ENCODE measurements at regions of chr17 and their contacts with region 1.

Region 1: GRCh38 chr17:42388381-42389134 is at the start of gene STAT3:
- DNase-seq: peak; percentile 100
- ATAC-seq: peak; percentile 99
- H3K4me3 ChIP-seq: peak within 1 kb of the TSS; percentile 93 to 98 (median 96)
- H3K27ac ChIP-seq: peak within 1 kb of the TSS; percentile 78
- H3K4me1 ChIP-seq: peaks cover 68% of the 10 kb centered on the region
- H3K27me3 ChIP-seq: no peaks in the 10 kb centered on the region; a peak in 1 of 5 replicates
- CTCF ChIP-seq: peak; percentile 57
- EP300 ChIP-seq: peak; percentile 97 to 100; a peak in 3 of 4 replicates
- POLR2A ChIP-seq: peak; percentile 54 to 88
- RAD21 ChIP-seq: peak; percentile 54; the same call in 1 of the 2 replicates
- total RNA-seq, gene STAT3: 61.8 and 82.7 TPM in 2 replicates

Region 2: GRCh38 chr17:42276359-42276608 is 112.3 kb before region 1 on chr17 and contains the start of gene STAT5B:
- CTCF ChIA-PET with region 1: no interaction called
- POLR2A ChIA-PET with region 1: interaction called, 11 read pairs
- in situ Hi-C with region 1: no loop called
- intact Hi-C with region 1: no loop called
- DNase-seq: no peak
- ATAC-seq: peak; percentile 20; the same call in 2 of the 3 replicates
- H3K4me3 ChIP-seq: peak within 1 kb of the TSS; percentile 81 to 96 (median 91)
- H3K27ac ChIP-seq: peak within 1 kb of the TSS; percentile 94
- H3K4me1 ChIP-seq: peaks cover 63% of the 10 kb centered on the region
- H3K27me3 ChIP-seq: peaks cover 0 to 9% of the 10 kb centered on the region in 2 experiments; a peak in 2 of 5 replicates
- CTCF ChIP-seq: no peak
- EP300 ChIP-seq: no peak
- POLR2A ChIP-seq: peak in 1 of 2 experiments; percentile 67; a peak in 1 of 4 replicates
- RAD21 ChIP-seq: no peak
- total RNA-seq, gene STAT5B: 17.2 and 21.0 TPM in 2 replicates

Region 3: GRCh38 chr17:42361781-42362186 is 26.8 kb before region 1 on chr17:
- CTCF ChIA-PET with region 1: no interaction called
- POLR2A ChIA-PET with region 1: interaction called, 10 read pairs
- in situ Hi-C with region 1: no loop called
- intact Hi-C with region 1: no loop called
- DNase-seq: peak; percentile 34
- ATAC-seq: peak; percentile 62
- H3K4me3 ChIP-seq: no peak overlapping the region
- H3K27ac ChIP-seq: no peak overlapping the region
- H3K4me1 ChIP-seq: peaks cover 38% of the 10 kb centered on the region
- H3K27me3 ChIP-seq: no peaks in the 10 kb centered on the region
- CTCF ChIP-seq: no peak
- EP300 ChIP-seq: no peak
- POLR2A ChIP-seq: no peak
- RAD21 ChIP-seq: no peak

Region 4: DNA sequence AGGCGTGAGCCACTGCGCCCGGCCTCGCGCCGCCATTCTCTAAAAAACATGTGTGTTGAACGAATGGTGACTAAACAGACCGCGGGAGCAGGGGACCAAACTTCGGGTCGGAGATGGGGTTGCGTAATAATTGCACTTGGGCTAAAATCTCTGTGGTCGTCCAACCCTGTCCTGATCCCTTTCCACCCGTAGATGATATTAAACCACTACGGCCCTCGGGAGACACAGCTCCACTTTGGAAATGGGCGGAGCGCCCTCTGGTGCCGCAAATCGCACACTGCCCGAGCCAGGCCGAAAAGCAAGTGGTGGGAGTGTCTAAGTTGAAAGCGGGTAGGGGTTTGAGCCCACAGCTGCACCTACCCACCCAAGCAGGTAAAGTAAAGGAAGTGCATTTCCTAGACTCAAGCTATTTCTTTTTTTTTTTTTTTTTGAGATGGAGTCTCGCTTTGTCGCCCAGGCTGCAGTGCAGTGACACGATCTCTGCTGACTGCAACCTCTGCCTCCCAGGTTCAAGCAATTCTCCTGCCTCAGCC is 17.5 kb after region 1 on chr17:
- CTCF ChIA-PET with region 1: no interaction called
- POLR2A ChIA-PET with region 1: interaction called, 57 read pairs
- in situ Hi-C with region 1: no loop called
- intact Hi-C with region 1: no loop called
- DNase-seq: peak; percentile 63
- ATAC-seq: peak; percentile 84
- H3K4me3 ChIP-seq: no peak overlapping the region
- H3K27ac ChIP-seq: no peak overlapping the region
- H3K4me1 ChIP-seq: 0 out of 2 replicates have a peak, but pooled peaks cover 8% of the 10 kb centered on the region
- H3K27me3 ChIP-seq: no peaks in the 10 kb centered on the region
- CTCF ChIP-seq: peak; percentile 98
- EP300 ChIP-seq: no peak
- POLR2A ChIP-seq: no peak
- RAD21 ChIP-seq: peak; percentile 98

Region 5: DNA sequence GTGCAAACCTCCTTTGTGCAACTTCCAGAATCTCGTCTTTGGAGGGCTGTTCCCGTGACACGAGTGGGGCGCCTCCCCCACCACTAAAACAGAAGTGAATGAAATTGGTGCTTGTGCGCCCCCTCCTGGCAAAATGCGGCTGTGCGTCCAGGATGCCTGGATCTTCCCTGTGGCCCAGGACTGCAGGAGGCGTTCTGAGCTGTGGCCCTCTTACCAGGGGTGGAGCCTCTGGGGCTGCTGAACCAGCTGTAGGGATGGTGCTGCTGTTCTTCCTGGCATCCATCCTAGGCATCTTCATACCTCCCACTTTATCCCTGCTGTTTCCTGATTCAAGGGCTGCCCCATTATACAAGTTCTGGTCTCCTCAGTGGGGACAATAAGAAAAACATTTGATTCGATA is 129.0 kb after region 1 on chr17:
- CTCF ChIA-PET with region 1: no interaction called
- POLR2A ChIA-PET with region 1: interaction called, 11 read pairs
- in situ Hi-C with region 1: no loop called
- intact Hi-C with region 1: no loop called
- DNase-seq: peak; percentile 80
- ATAC-seq: peak; percentile 77
- H3K4me3 ChIP-seq: no peak overlapping the region
- H3K27ac ChIP-seq: no peak overlapping the region
- H3K4me1 ChIP-seq: peaks cover 53% of the 10 kb centered on the region
- H3K27me3 ChIP-seq: no peaks in the 10 kb centered on the region
- CTCF ChIP-seq: peak; percentile 98
- EP300 ChIP-seq: no peak
- POLR2A ChIP-seq: no peak
- RAD21 ChIP-seq: peak; percentile 89

Measured in HepG2 (cell line).